Activated CD4-positive, alpha-beta T cell treated with anti-CD3 and anti-CD28 coated beads for 36 hours (primary cell): ENCODE measurements at regions of chr6 and their contacts with region 1.

Region 1: GRCh38 chr6:29948277-29948676 is 5.9 kb downstream of the HLA-A start:
- DNase-seq: no peak
- ATAC-seq: no peak
- H3K4me3 Mint-ChIP-seq: no peak overlapping the region
- H3K27ac Mint-ChIP-seq: peak overlapping the region; percentile 11
- H3K4me1 Mint-ChIP-seq: peaks cover 38% of the 10 kb centered on the region
- H3K27me3 Mint-ChIP-seq: no peaks in the 10 kb centered on the region

Region 2: GRCh38 chr6:29792123-29793035 is 155.9 kb before region 1 on chr6:
- CTCF ChIA-PET with region 1: no interaction called
- POLR2A ChIA-PET with region 1: interaction called, 3 read pairs
- intact Hi-C with region 1: loop called (anchors 1 to 2 kb)
- DNase-seq: peak; percentile 82
- ATAC-seq: peak; percentile 86
- H3K4me3 Mint-ChIP-seq: peak overlapping the region; percentile 62
- H3K27ac Mint-ChIP-seq: no peak overlapping the region
- H3K4me1 Mint-ChIP-seq: peaks cover 12% of the 10 kb centered on the region
- H3K27me3 Mint-ChIP-seq: peaks cover 34% of the 10 kb centered on the region

Region 3: DNA sequence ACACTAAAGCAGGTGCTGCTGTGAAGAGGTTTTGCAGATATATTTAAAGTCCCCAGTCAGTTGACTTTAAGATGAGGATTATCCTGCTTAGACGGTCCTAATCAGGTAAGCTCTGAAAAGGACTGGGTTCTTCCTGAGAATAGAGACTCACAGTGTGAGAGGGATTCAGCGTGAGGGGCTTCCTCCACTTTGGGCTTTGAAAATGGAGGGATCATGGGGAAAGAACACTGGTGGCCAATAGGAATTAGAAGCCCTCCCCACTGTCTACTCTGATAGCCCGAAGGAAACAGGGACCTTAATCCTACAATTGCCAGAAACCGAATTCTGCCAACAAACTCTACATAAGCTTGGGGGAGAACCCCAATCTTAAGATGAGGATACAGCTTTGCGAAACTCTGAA is 150.3 kb before region 1 on chr6:
- CTCF ChIA-PET with region 1: no interaction called
- POLR2A ChIA-PET with region 1: interaction called, 3 read pairs
- intact Hi-C with region 1: loop called (anchors 1 kb)
- DNase-seq: no peak
- ATAC-seq: no peak
- H3K4me3 Mint-ChIP-seq: no peak overlapping the region
- H3K27ac Mint-ChIP-seq: no peak overlapping the region
- H3K4me1 Mint-ChIP-seq: peaks cover 9% of the 10 kb centered on the region
- H3K27me3 Mint-ChIP-seq: peaks cover 27% of the 10 kb centered on the region

Region 4: GRCh38 chr6:29887819-29888776 is 60.2 kb before region 1 on chr6:
- CTCF ChIA-PET with region 1: interaction called, 3 read pairs
- POLR2A ChIA-PET with region 1: interaction called, 14 read pairs
- intact Hi-C with region 1: loop called (anchors 1 kb)
- DNase-seq: peak; percentile 90
- ATAC-seq: peak; percentile 77
- H3K4me3 Mint-ChIP-seq: peak overlapping the region; percentile 77
- H3K27ac Mint-ChIP-seq: peak overlapping the region; percentile 80
- H3K4me1 Mint-ChIP-seq: peaks cover 16% of the 10 kb centered on the region
- H3K27me3 Mint-ChIP-seq: no peaks in the 10 kb centered on the region

Region 5: GRCh38 chr6:30441171-30441570 is 492.9 kb after region 1 on chr6:
- CTCF ChIA-PET with region 1: no interaction called
- POLR2A ChIA-PET with region 1: no interaction called
- intact Hi-C with region 1: no loop called
- DNase-seq: peak; percentile 31
- ATAC-seq: peak; percentile 74
- H3K4me3 Mint-ChIP-seq: no peak overlapping the region
- H3K27ac Mint-ChIP-seq: no peak overlapping the region
- H3K4me1 Mint-ChIP-seq: peaks cover 12% of the 10 kb centered on the region
- H3K27me3 Mint-ChIP-seq: peaks cover 69% of the 10 kb centered on the region